ENCODE measurements at regions of chr4 and their contacts with region 1.

Region 1: DNA sequence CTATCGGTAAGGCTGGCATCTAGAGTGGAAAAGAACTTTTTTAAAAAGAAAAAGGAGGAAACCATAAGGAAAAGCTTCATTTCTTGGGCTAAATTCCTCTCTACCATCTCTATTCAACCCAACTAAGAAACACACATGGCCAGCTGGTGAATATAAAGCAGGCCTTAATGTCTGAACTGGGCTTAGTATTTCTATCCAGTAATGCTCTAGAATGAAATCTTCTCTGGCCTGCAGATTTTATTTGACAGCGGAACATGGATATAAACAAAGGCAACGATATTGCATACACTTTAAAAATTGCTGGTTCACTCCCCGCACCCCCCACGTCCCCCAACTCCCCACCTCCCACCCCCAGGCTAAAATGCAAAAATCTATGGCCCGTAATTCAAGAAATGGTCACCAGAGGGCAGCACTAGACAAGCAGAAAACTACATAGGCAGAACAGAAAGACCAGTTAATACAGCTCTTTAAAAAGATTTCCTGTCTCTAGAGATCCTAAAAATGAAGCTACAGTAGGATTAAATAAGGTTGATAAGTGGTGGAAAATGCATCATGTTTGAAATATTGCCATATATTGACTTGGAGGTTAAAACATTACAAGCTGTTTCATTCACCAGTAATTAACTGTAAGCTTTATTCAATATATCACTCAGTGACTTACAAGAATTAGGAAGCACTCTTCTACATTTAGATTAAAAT is 155.2 kb upstream of the GALNT7 start:
- DNase-seq: peak in 8 of 9 experiments; percentile 20 to 63 (median 54)
- ATAC-seq: peak; percentile 63
- H3K4me3 ChIP-seq: no peak overlapping the region
- H3K4me3 Mint-ChIP-seq: no peak overlapping the region
- H3K27ac ChIP-seq: no peak overlapping the region
- H3K27ac Mint-ChIP-seq: no peak overlapping the region
- H3K4me1 ChIP-seq: no peaks in the 10 kb centered on the region
- H3K4me1 Mint-ChIP-seq: no peaks in the 10 kb centered on the region
- H3K27me3 ChIP-seq: no peaks in the 10 kb centered on the region
- H3K27me3 Mint-ChIP-seq: peaks cover 3% of the 10 kb centered on the region
- CTCF ChIP-seq: peak; percentile 76

Region 2: GRCh38 chr4:173074501-173074946 is 61.1 kb after region 1 on chr4:
- CTCF ChIA-PET with region 1: no interaction called
- POLR2A ChIA-PET with region 1: no interaction called
- intact Hi-C with region 1: no loop called
- DNase-seq: no peak
- ATAC-seq: no peak
- H3K4me3 ChIP-seq: no peak overlapping the region
- H3K4me3 Mint-ChIP-seq: no peak overlapping the region
- H3K27ac ChIP-seq: no peak overlapping the region
- H3K27ac Mint-ChIP-seq: no peak overlapping the region
- H3K4me1 ChIP-seq: no peaks in the 10 kb centered on the region
- H3K4me1 Mint-ChIP-seq: no peaks in the 10 kb centered on the region
- H3K27me3 ChIP-seq: no peaks in the 10 kb centered on the region
- H3K27me3 Mint-ChIP-seq: peaks cover 5% of the 10 kb centered on the region
- CTCF ChIP-seq: no peak

Region 3: DNA sequence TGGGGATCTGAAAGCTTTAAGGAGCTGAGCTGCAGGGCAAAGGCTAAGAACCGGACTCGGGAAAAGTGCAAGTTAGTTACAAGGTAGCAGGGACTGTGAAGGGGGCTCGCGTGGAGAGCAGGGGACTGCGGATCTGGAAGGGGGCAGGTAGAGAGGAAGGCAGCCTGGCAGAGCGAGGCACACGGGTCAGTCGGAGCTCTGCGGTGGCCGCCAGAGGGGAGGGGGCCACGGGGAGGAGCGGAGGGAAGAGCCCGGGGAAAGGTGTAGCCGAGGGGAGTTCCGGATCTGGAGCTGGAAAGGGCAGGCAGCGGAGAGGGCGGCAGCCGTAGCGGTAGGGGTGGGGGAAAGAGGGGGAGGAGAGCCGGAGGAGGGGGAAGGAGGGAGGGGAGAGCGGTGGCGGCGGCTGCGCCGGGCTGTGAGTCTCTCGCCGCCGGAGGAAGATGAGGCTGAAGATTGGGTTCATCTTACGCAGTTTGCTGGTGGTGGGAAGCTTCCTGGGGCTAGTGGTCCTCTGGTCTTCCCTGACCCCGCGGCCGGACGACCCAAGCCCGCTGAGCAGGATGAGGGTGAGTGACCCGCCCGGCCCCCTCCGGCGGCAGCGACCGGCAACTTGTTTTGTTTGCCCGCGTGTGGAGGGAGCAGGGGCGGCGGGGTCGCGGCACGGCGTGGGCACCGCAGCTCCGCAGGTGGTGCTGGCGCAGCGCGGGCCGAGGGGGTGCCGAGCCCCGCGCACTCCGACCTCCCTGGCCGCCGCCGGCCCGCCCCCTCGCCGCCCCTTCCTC is 155.2 kb after region 1 on chr4 and contains the start of gene GALNT7:
- CTCF ChIA-PET with region 1: interaction called, 5 read pairs
- POLR2A ChIA-PET with region 1: no interaction called
- intact Hi-C with region 1: loop called in 1 of 2 experiments (anchors 2 kb)
- DNase-seq: peak in 8 of 9 experiments; percentile 43 to 81 (median 66)
- ATAC-seq: peak; percentile 61
- H3K4me3 ChIP-seq: peak within 1 kb of the TSS; percentile 65 to 89
- H3K4me3 Mint-ChIP-seq: peak within 1 kb of the TSS; percentile 96
- H3K27ac ChIP-seq: peak within 1 kb of the TSS; percentile 42 to 68
- H3K27ac Mint-ChIP-seq: peak within 1 kb of the TSS; percentile 94
- H3K4me1 ChIP-seq: peaks cover 18% of the 10 kb centered on the region
- H3K4me1 Mint-ChIP-seq: peaks cover 48% of the 10 kb centered on the region
- H3K27me3 ChIP-seq: no peaks in the 10 kb centered on the region
- H3K27me3 Mint-ChIP-seq: no peaks in the 10 kb centered on the region
- CTCF ChIP-seq: no peak
- total RNA-seq, gene GALNT7: 4.4 to 7.3 TPM

Region 4: DNA sequence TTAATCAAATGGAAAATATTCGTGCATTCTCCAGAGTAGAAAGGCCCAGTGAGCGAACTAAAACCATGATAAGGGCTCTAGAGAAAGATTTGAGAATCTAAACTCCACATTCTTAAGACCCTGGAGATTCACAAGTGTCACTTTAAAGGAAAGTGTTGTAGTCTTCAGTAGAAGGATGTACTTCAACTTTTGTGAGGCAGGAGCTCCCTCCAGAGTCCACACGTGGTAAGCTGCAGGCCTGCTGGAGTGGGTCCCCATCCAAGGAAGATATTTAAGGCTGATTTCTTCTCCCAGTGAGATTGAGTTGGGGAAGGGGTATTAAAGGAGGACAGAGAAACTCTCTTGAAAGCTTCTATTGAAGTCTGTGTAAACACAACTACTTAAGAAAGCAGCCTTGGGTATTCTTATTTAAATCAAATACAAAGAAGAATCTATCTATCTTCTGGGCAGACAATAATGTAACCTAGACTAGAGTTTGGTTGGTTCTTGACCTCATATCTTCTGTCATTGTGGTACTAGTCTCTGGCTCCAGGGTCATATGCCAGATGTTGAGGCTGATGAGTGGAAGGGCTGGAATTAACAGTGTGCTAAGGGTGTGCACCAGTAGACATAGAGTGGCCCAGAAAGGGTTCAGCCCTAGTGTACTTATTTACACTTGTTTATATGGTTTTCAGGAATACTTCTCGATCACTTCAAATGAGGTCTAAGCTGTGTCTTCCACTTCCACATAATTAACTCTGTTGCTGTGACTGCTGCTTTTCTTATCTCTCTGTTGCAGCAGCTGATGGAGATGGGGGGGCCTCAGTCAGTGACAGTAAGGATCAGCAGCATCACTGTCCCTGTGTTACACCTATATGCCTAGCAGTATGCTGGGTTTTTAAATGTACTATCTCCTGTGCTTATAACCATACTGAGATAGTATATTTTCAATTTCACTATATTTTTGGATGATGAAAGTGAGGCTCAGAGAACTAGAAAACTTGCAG is 244.6 kb after region 1 on chr4:
- CTCF ChIA-PET with region 1: interaction called, 71 read pairs
- POLR2A ChIA-PET with region 1: no interaction called
- intact Hi-C with region 1: loop called (anchors 1 kb)
- DNase-seq: peak; percentile 10 to 71 (median 56)
- ATAC-seq: peak; percentile 77
- H3K4me3 ChIP-seq: no peak overlapping the region
- H3K4me3 Mint-ChIP-seq: no peak overlapping the region
- H3K27ac ChIP-seq: no peak overlapping the region
- H3K27ac Mint-ChIP-seq: no peak overlapping the region
- H3K4me1 ChIP-seq: no peaks in the 10 kb centered on the region
- H3K4me1 Mint-ChIP-seq: peaks cover 4% of the 10 kb centered on the region
- H3K27me3 ChIP-seq: no peaks in the 10 kb centered on the region
- H3K27me3 Mint-ChIP-seq: no peaks in the 10 kb centered on the region
- CTCF ChIP-seq: peak; percentile 77

Region 5: GRCh38 chr4:173280998-173281397 is 267.6 kb after region 1 on chr4:
- CTCF ChIA-PET with region 1: interaction called, 11 read pairs
- POLR2A ChIA-PET with region 1: no interaction called
- intact Hi-C with region 1: no loop called
- DNase-seq: peak in 1 of 9 experiments; percentile 8
- ATAC-seq: no peak
- H3K4me3 ChIP-seq: no peak overlapping the region
- H3K4me3 Mint-ChIP-seq: no peak overlapping the region
- H3K27ac ChIP-seq: no peak overlapping the region
- H3K27ac Mint-ChIP-seq: no peak overlapping the region
- H3K4me1 ChIP-seq: no peaks in the 10 kb centered on the region
- H3K4me1 Mint-ChIP-seq: peaks cover 7% of the 10 kb centered on the region
- H3K27me3 ChIP-seq: no peaks in the 10 kb centered on the region
- H3K27me3 Mint-ChIP-seq: no peaks in the 10 kb centered on the region
- CTCF ChIP-seq: no peak

Region 6: DNA sequence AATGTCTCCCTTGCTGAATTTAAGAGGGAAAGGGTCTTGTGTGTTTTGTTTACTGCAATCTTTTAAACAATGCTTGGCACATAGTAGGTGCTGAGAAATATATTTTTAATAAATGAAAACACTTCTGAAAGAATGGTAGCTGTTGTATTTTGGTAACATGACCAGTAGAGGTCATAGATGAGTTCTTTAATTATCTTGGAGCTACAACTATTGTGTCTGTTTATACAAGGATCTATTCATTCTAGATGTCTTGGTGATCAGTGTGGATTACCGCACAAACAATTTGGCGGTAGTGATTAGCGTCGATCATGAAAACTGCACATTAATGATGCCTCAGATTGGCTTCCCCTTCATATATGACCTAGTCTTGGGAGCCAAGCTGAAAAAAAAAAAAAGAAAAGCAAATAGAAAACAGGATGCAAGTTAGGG is 407.0 kb after region 1 on chr4:
- CTCF ChIA-PET with region 1: interaction called, 13 read pairs
- POLR2A ChIA-PET with region 1: no interaction called
- intact Hi-C with region 1: loop called (anchors 1 kb)
- DNase-seq: peak in 2 of 9 experiments; percentile 14 to 41
- ATAC-seq: peak; percentile 44
- H3K4me3 ChIP-seq: no peak overlapping the region
- H3K4me3 Mint-ChIP-seq: no peak overlapping the region
- H3K27ac ChIP-seq: no peak overlapping the region
- H3K27ac Mint-ChIP-seq: no peak overlapping the region
- H3K4me1 ChIP-seq: peaks cover 5% of the 10 kb centered on the region
- H3K4me1 Mint-ChIP-seq: peaks cover 7% of the 10 kb centered on the region
- H3K27me3 ChIP-seq: no peaks in the 10 kb centered on the region
- H3K27me3 Mint-ChIP-seq: peaks cover 4% of the 10 kb centered on the region
- CTCF ChIP-seq: peak; percentile 57

Region 7: DNA sequence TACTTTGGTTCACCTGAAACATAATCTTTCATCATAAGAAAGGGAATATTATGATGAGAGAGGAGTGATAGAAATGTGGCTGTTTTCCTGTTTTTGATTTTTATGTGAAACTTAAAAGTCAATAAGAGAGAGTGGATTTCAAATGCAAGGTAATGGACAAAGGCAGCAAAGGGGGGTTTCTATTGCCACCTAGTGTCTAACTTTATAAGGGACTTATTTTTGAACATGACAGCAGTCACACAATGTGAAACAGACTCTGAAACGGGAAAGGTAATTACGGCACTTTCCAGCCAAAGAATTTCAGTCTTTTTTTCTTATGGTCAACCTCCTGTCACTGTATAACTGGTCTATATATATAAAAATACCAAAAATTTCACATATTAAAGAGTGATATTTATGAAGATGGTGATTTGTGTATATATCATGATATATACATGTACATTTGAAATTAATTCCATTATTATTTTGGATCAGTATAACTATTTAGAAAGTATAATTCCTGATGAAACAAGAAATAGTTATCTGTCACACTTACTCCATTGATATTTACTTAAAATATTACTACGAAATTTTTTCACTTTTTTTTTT is 1143.0 kb after region 1 on chr4:
- CTCF ChIA-PET with region 1: no interaction called
- POLR2A ChIA-PET with region 1: no interaction called
- intact Hi-C with region 1: loop called in 1 of 2 experiments (anchors 5 kb)
- DNase-seq: peak in 2 of 9 experiments; percentile 25 to 29
- ATAC-seq: no peak
- H3K4me3 ChIP-seq: no peak overlapping the region
- H3K4me3 Mint-ChIP-seq: no peak overlapping the region
- H3K27ac ChIP-seq: no peak overlapping the region
- H3K27ac Mint-ChIP-seq: no peak overlapping the region
- H3K4me1 ChIP-seq: no peaks in the 10 kb centered on the region
- H3K4me1 Mint-ChIP-seq: no peaks in the 10 kb centered on the region
- H3K27me3 ChIP-seq: peaks cover 0 to 3% of the 10 kb centered on the region in 2 experiments
- H3K27me3 Mint-ChIP-seq: peaks cover 18% of the 10 kb centered on the region
- CTCF ChIP-seq: peak; percentile 57